AG04450 (cell line): ENCODE measurements at regions of chr22 and their contacts with region 1.

Region 1: DNA sequence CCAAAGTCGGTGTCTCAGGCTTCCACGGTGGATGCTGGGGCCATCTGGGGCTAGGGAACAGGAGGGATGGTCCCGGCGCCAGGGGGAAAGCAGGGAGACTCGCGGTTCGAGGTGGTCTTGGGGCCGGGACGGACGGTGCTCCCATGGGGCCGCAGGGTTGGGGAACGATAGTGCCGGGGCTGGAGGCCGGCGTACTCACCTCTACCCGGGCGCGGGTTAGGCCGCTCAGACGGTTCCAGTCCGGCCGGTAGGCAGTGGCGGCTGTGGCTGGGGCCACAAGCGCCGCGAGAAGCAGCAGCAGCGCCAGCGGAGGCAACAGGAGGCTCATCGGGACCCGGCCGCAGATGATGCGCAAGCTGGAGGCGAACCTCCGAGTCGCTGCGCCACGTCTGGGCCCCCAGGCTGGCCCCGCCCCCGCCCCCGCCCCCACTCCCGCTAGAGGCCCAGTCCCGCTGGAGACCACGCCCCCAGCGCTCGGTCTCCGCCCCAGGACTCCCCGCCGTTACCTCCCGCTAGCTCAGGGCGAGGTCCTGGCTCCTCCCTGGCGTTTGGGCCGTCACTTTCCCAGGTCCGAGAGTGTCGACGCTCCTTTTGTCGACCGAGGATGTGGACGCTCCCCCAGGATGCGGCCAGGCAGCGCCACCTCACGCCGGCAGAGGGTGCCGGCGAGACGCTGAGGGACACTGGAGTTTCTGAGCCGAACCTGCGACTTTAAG is at the start of gene SELENOM:
- DNase-seq: peak; percentile 97
- H3K4me3 ChIP-seq: peak within 1 kb of the TSS; percentile 95
- H3K27ac ChIP-seq: peak within 1 kb of the TSS; percentile 98
- H3K27me3 ChIP-seq: no peaks in the 10 kb centered on the region
- CTCF ChIP-seq: peak; percentile 97
- polyA plus RNA-seq, gene SELENOM: 89.0 and 153 TPM in 2 replicates

Region 2: DNA sequence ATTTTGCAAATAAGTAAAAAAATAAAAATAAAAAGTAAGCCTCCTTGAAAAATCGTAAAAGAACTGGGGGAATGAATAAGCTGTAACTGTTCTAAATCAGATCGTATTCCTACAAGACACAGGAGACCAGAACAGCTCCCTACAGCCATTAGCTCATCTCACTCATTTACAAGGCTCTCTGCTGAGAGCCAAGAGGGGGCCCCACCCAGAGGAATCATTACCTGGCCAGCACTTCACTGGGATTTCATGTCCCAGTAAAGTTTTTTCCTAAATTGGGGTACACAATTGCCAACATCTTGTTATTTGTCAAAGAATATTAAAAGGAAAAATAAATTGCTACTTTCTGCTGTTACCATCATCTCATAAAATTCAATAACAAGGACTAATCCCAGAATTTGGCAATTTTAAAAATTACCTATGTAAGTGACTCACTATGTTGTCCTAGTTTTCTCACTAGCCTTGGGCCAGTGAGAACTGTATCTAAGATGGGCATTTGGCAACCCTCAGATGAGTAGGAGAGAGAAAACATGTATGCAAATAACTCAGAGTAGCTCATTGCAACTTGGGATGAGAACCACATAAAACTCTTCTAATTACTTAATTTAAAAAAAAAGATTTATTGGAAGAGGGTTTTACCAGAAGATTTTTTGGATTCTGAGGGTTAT is 44.6 kb before region 1 on chr22:
- CTCF ChIA-PET with region 1: no interaction called
- POLR2A ChIA-PET with region 1: no interaction called
- DNase-seq: no peak
- H3K4me3 ChIP-seq: no peak overlapping the region
- H3K27ac ChIP-seq: no peak overlapping the region
- H3K27me3 ChIP-seq: no peaks in the 10 kb centered on the region
- CTCF ChIP-seq: no peak

Region 3: DNA sequence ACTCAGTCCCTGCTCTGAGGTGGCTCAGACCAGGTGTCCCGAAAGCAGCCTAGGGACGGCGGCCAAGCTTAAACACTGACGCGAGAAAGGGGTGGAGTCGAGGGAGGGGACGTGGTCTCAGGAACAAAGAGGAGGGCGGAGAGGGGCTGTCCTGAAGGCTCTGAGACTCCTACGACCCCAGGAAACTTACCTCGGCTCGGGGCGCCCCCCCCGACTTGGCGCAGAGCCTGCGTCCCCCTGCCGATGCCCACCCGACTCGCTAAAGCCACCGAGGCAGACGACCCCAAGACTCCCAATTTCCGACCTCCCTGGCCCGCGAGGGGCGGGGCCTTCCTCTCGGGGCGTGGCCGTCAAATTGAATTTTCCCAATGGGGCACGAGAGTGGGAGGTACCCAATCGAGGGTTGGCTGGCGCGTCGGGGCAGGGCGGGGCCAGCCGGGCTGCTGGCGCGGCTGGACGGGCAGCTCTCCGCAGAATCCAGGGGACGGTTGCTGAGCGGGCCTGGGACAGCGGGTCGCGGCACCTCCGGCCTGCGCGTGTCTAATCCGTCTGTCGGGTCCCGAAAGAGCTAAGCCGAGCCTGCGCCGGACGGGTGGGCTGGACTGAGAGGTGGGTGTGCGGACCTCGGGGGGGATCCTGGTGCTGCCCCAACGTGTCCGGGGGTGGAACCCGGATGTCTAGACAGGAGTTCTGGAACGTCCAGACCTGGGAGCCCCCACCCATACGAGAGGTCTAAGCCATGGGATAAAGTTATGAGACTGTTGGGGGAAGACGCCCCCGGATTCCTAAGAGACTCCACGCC is 26.3 kb before region 1 on chr22 and contains the start of gene SMTN:
- CTCF ChIA-PET with region 1: interaction called, 9 read pairs
- POLR2A ChIA-PET with region 1: interaction called, 10 read pairs
- DNase-seq: peak; percentile 60
- H3K4me3 ChIP-seq: peak within 1 kb of the TSS; percentile 91
- H3K27ac ChIP-seq: peak within 1 kb of the TSS; percentile 85
- H3K27me3 ChIP-seq: no peaks in the 10 kb centered on the region
- CTCF ChIP-seq: 0 out of 2 replicates have a peak, but pooled peaks have one; percentile 7
- polyA plus RNA-seq, gene SMTN: 13.2 and 14.1 TPM in 2 replicates

Region 4: GRCh38 chr22:31119026-31119717 is 11.8 kb after region 1 on chr22:
- CTCF ChIA-PET with region 1: interaction called, 13 read pairs
- POLR2A ChIA-PET with region 1: no interaction called
- DNase-seq: no peak
- H3K4me3 ChIP-seq: no peak overlapping the region
- H3K27ac ChIP-seq: no peak overlapping the region
- H3K27me3 ChIP-seq: peaks cover 7% of the 10 kb centered on the region
- CTCF ChIP-seq: no peak

Region 5: GRCh38 chr22:31139866-31140716 is 32.8 kb after region 1 on chr22 and contains the start of gene PLA2G3:
- CTCF ChIA-PET with region 1: interaction called, 12 read pairs
- POLR2A ChIA-PET with region 1: no interaction called
- DNase-seq: no peak
- H3K4me3 ChIP-seq: no peak within 1 kb of the TSS
- H3K27ac ChIP-seq: no peak within 1 kb of the TSS
- H3K27me3 ChIP-seq: peaks cover 27% of the 10 kb centered on the region
- CTCF ChIP-seq: peak; percentile 26; the same call in 1 of the 2 replicates
- polyA plus RNA-seq, gene PLA2G3: 0.10 and 0.11 TPM in 2 replicates

Region 6: DNA sequence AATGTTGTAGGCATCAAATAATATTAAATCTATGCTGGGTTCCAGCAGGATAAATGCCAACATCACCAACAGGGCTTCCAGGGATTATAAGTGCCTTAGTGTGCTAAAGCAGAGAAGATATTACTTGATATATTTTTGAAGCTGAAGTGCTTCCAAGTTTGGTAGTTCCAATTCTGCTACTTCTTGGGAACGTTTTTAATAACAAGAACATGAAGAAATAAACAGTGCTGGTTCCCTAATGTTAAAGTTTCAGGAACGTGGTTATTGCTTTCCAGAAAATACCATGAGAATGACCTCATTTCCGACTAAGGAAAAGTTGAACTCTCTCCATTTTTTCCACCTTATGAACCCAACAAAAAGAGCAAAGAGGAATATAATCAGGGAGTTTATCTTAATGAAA is 48.1 kb after region 1 on chr22:
- CTCF ChIA-PET with region 1: interaction called, 38 read pairs
- POLR2A ChIA-PET with region 1: interaction called, 9 read pairs
- DNase-seq: peak; percentile 21
- H3K4me3 ChIP-seq: no peak overlapping the region
- H3K27ac ChIP-seq: peak overlapping the region; percentile 12
- H3K27me3 ChIP-seq: no peaks in the 10 kb centered on the region
- CTCF ChIP-seq: no peak

Region 7: GRCh38 chr22:31230871-31231621 is 123.7 kb after region 1 on chr22:
- CTCF ChIA-PET with region 1: interaction called, 72 read pairs
- POLR2A ChIA-PET with region 1: no interaction called
- DNase-seq: peak; percentile 53
- H3K4me3 ChIP-seq: no peak overlapping the region
- H3K27ac ChIP-seq: no peak overlapping the region
- H3K27me3 ChIP-seq: no peaks in the 10 kb centered on the region
- CTCF ChIP-seq: peak; percentile 87